Activated B cell treated with CpG ODN at 0.5 μM for 24 hours (primary cell): ENCODE measurements at regions of chr10 and their contacts with region 1.

Region 1: GRCh38 chr10:104353325-104354048 is at the start of gene CFAP58:
- DNase-seq: peak; percentile 83
- ATAC-seq: peak; percentile 77
- H3K4me3 Mint-ChIP-seq: no peak within 1 kb of the TSS
- H3K27ac Mint-ChIP-seq: peak within 1 kb of the TSS; percentile 57
- H3K4me1 Mint-ChIP-seq: peaks cover 11% of the 10 kb centered on the region
- H3K27me3 Mint-ChIP-seq: no peaks in the 10 kb centered on the region
- CTCF ChIP-seq: no peak
- total RNA-seq, gene CFAP58: not detected in 2 replicates

Region 2: DNA sequence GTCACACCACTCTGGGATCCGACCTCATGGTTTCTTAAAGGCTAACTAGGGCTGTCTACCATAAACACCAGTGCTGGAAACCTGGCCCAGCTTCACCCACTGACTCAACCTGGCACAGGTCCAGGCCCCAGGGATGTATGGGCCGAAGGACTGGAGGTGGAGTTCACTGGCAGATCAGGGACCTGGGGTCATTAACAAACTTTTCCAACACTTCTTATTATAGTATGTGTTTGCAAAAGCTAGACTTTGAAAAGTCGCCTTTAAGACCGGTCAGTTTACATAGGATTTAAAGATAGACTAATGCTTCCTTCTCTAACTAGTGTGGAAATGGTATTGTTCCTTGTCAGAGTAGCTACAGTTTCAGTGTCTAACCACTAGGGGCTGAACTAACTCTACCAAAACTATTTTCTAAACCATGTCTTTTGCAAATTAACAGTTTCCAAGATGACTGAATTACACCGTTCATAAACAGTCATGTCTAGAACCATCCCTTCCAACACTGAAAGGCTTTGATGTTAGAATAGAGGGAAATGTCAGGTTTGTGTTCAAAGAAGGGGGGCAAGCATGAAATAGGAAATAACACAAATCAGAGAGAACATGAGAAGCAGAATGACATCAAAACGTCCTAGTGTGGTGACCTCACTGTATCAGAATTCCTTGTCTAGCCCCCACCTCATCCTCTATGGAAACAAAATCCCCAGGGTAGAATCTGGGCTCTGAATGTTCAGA is 465.2 kb before region 1 on chr10:
- CTCF ChIA-PET with region 1: no interaction called
- POLR2A ChIA-PET with region 1: no interaction called
- intact Hi-C with region 1: loop called (anchors 1 kb)
- DNase-seq: no peak
- ATAC-seq: peak; percentile 77
- H3K4me3 Mint-ChIP-seq: no peak overlapping the region
- H3K27ac Mint-ChIP-seq: no peak overlapping the region
- H3K4me1 Mint-ChIP-seq: peaks cover 2% of the 10 kb centered on the region
- H3K27me3 Mint-ChIP-seq: no peaks in the 10 kb centered on the region
- CTCF ChIP-seq: peak; percentile 67

Region 3: DNA sequence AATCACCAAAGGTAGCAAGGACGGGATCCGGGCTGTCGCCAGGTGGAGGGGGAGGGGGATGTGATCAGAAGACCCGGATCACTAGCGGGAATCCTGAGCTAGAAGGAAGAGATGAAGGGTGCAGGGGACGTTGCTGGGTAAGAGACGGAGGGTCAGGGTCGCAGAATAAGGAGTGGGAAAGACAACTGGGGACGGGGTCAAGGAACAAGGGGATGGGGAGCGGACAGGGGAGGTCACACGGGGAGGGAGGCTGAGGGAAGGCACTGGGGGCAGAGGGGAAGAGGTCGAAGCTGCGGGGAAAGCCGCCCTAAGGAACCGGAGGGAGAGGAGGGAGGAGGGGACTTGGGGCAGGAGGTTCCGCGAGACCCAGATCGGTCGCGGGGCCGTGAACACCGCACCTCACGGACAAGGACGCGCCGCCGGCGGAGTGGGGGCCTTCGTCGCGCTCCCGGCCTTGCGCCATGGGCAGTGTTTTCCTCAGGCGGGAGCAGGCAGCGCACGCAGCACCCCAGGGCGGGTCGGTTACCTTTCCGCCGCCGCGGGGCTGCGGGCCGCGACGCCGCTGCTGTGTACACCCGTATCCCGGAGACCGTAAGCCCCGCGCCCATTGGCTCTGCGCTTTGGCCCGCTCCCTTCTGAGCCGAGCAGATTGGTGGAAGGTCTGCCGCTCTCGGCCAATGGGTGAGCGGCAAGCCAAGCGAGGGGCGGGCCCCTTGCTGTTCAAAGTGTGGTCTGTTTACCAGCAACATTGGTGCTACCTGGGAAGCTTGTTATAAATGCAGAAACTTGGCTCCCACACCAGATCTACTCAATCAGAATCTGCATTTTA is 121.5 kb before region 1 on chr10 and contains the start of gene CFAP43:
- CTCF ChIA-PET with region 1: no interaction called
- POLR2A ChIA-PET with region 1: no interaction called
- intact Hi-C with region 1: loop called (anchors 1 kb)
- DNase-seq: peak; percentile 96
- ATAC-seq: peak; percentile 100
- H3K4me3 Mint-ChIP-seq: peak within 1 kb of the TSS; percentile 83
- H3K27ac Mint-ChIP-seq: peak within 1 kb of the TSS; percentile 41
- H3K4me1 Mint-ChIP-seq: peaks cover 12% of the 10 kb centered on the region
- H3K27me3 Mint-ChIP-seq: peaks cover 16% of the 10 kb centered on the region
- CTCF ChIP-seq: no peak
- total RNA-seq, gene CFAP43: 0.22 TPM in 1 of 2 replicates, not detected in the other

Region 4: DNA sequence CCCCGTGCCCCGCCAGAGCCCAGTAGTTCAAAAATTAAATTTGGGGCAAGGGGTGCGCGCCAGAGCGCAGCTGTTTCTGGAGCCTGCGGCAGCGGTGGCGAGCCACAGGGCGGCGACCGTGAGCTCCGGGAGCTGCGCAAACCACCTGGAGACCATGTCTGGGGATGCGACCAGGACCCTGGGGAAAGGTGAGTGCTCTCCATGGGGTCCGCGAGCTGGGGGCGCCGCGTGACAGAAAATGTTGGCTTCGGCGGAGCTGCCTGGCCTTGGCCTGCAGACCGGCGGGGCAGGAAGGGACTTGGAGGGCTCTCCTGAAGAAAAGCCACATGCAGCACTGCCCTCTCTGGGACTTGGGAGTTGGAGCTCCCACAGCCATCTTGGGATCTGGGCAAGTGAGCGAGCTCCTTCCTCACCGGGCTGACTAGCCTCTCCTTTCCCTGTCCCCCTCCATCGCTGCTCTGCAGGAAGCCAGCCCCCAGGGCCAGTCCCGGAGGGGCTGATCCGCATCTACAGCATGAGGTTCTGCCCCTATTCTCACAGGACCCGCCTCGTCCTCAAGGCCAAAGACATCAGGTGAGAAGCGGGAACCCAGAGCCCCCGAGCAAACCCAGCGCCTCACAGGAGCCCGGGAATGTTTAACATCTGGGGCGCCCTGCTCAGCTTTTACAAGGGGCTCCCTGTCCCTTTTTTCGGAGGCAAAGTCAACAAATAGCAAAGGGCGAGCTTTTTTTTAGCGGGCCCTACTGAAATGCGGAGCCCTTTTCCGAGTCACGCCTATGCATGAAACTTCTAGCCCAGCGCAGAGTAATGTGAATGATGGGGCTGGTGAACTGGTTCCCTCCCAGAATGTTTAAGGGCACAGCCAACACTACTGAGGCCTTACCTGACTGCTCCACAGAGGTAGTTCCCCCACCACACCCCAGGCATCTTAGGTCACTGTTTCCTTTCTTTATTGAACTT is 78.4 kb before region 1 on chr10:
- CTCF ChIA-PET with region 1: interaction called, 35 read pairs
- POLR2A ChIA-PET with region 1: interaction called, 4 read pairs
- intact Hi-C with region 1: no loop called
- DNase-seq: peak; percentile 36
- ATAC-seq: peak; percentile 83
- H3K4me3 Mint-ChIP-seq: no peak overlapping the region
- H3K27ac Mint-ChIP-seq: no peak overlapping the region
- H3K4me1 Mint-ChIP-seq: peaks cover 6% of the 10 kb centered on the region
- H3K27me3 Mint-ChIP-seq: peaks cover 5% of the 10 kb centered on the region
- CTCF ChIP-seq: no peak

Region 5: DNA sequence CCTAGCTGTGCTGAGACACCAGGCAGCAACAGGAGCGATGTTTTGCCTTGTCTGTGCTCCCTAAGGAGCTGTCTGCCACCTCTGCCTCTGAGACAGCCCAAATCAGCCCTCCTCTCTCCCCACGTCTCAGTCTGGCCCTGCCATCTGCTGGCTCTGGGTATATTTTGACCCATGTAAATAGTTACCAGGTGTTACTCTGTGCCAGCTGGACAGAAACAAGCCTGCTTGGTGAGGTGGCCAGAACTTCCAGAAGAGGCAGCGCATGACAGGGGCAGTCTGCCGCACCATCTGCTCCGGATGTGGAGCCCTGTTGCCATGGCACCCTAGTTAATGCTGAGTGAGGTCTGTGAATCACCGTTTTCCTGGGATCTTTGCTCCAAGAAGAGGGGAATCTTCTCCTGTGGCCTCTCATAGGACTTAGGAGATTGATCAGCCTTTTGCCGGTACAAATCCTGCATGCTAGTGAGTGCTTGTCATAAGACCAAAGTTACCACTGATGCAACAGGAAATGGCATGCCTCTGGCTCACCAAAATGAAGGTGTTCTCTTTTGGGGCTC is 52.7 kb before region 1 on chr10:
- CTCF ChIA-PET with region 1: interaction called, 208 read pairs
- POLR2A ChIA-PET with region 1: interaction called, 22 read pairs
- intact Hi-C with region 1: loop called (anchors 1 kb)
- DNase-seq: no peak
- ATAC-seq: no peak
- H3K4me3 Mint-ChIP-seq: no peak overlapping the region
- H3K27ac Mint-ChIP-seq: no peak overlapping the region
- H3K4me1 Mint-ChIP-seq: peaks cover 3% of the 10 kb centered on the region
- H3K27me3 Mint-ChIP-seq: peaks cover 14% of the 10 kb centered on the region
- CTCF ChIP-seq: no peak

Region 6: GRCh38 chr10:104328896-104329710 is 24.4 kb before region 1 on chr10:
- CTCF ChIA-PET with region 1: interaction called, 11 read pairs
- POLR2A ChIA-PET with region 1: interaction called, 5 read pairs
- intact Hi-C with region 1: loop called (anchors 2 kb)
- DNase-seq: peak; percentile 44
- ATAC-seq: peak; percentile 82
- H3K4me3 Mint-ChIP-seq: peak overlapping the region; percentile 50
- H3K27ac Mint-ChIP-seq: peak overlapping the region; percentile 72
- H3K4me1 Mint-ChIP-seq: peaks cover 95% of the 10 kb centered on the region
- H3K27me3 Mint-ChIP-seq: no peaks in the 10 kb centered on the region
- CTCF ChIP-seq: no peak

Region 7: GRCh38 chr10:104371753-104372152 is 18.3 kb after region 1 on chr10:
- CTCF ChIA-PET with region 1: no interaction called
- POLR2A ChIA-PET with region 1: no interaction called
- intact Hi-C with region 1: no loop called
- DNase-seq: no peak
- ATAC-seq: no peak
- H3K4me3 Mint-ChIP-seq: no peak overlapping the region
- H3K27ac Mint-ChIP-seq: no peak overlapping the region
- H3K4me1 Mint-ChIP-seq: no peaks in the 10 kb centered on the region
- H3K27me3 Mint-ChIP-seq: peaks cover 19% of the 10 kb centered on the region
- CTCF ChIP-seq: no peak

Region 8: DNA sequence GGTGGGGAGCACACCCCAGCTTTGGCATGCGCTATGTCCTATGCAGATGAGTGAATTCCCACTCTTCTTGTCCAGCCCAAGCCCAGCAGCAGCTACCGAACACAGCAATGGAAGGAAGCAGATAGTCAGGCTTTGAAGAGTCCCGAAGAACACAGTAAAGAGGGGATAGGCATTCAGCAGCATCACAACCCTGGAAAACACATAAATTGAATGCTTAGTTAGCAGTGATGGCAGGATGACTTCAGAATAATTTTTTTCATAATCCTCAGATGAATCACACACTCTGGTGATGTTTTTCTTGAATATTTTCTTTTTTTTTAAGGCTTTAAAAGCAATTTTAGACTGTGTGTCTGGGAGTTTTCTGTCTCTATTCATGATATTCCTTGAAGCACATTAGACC is 95.9 kb after region 1 on chr10:
- CTCF ChIA-PET with region 1: no interaction called
- POLR2A ChIA-PET with region 1: no interaction called
- intact Hi-C with region 1: no loop called
- DNase-seq: no peak
- ATAC-seq: no peak
- H3K4me3 Mint-ChIP-seq: no peak overlapping the region
- H3K27ac Mint-ChIP-seq: no peak overlapping the region
- H3K4me1 Mint-ChIP-seq: no peaks in the 10 kb centered on the region
- H3K27me3 Mint-ChIP-seq: peaks cover 13% of the 10 kb centered on the region
- CTCF ChIP-seq: no peak